ENCODE measurements at regions of chr17 and their contacts with region 1.

Region 1: GRCh38 chr17:50605429-50605828 is 29.3 kb upstream of the ABCC3 start:
- DNase-seq: no peak
- H3K4me3 ChIP-seq: no peak overlapping the region
- H3K27ac ChIP-seq: no peak overlapping the region
- H3K27me3 ChIP-seq: peaks cover 0 to 3% (median 0%) of the 10 kb centered on the region in 45 donors
- CTCF ChIP-seq: no peak

Region 2: DNA sequence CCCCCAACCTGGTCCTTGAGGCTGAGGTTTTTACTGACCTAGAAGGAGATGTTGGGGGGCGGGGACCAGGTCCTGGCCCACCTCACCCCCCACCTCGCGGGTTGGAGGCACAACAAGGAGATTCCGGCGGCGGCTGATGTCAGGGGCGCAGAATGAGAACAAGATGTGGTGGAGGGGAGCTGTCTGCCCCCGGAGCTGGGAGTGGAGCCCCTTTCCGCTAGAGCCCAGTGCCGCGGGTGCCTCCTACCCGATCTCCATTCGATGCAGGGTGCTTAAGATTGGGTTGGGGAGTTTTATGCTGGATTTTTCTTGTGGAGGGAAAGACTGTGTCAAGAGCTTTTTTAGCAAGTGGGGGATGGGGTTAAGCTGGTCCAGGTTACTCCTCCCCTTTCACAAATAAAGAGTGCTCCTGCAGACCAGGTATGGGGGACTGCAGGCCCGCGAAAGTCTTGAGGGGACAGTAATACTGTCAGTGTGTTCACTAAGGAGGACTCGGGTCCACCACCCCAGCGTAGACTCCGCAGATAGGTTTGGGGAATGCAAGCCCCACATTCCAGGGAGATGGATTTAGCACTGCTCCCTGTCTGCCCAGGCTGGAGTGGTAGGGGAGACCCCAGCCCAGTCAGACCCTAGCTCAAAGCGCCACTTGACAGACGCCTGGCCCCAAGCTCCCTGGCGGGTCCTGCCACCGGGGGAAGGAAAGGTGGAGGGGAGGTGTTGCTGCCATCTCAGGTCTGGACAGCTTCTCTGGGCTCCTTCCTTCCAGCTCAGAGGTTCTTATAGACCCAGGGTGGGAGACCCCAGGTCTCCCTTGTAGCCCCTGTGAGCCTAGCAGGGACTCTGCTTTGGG is 43.0 kb before region 1 on chr17:
- intact Hi-C with region 1: loop called in 1 of 2 experiments (anchors 1 kb)
- DNase-seq: no peak
- H3K4me3 ChIP-seq: peak overlapping the region in 52 of 59 donors; percentile 14 to 73 (median 63)
- H3K27ac ChIP-seq: peak overlapping the region in 33 of 59 donors; percentile 3 to 74 (median 46)
- H3K27me3 ChIP-seq: peaks cover 0 to 43% (median 6%) of the 10 kb centered on the region in 45 donors
- CTCF ChIP-seq: no peak

Region 3: GRCh38 chr17:50570528-50570927 is 34.9 kb before region 1 on chr17:
- intact Hi-C with region 1: loop called in 1 of 2 experiments (anchors 2 kb)
- DNase-seq: no peak
- H3K4me3 ChIP-seq: no peak overlapping the region
- H3K27ac ChIP-seq: no peak overlapping the region
- H3K27me3 ChIP-seq: peaks cover 0 to 10% (median 0%) of the 10 kb centered on the region in 45 donors
- CTCF ChIP-seq: no peak

Region 4: GRCh38 chr17:50589095-50589705 is 16.2 kb before region 1 on chr17:
- intact Hi-C with region 1: no loop called
- DNase-seq: no peak
- H3K4me3 ChIP-seq: no peak overlapping the region
- H3K27ac ChIP-seq: peak overlapping the region in 4 of 59 donors; percentile 8 to 18 (median 9)
- H3K27me3 ChIP-seq: no peaks in the 10 kb centered on the region
- CTCF ChIP-seq: no peak